ENCODE measurements at regions of chr5 and their contacts with region 1.

Region 1: GRCh38 chr5:71932655-71933338 is 174.5 kb upstream of the MAP1B start:
- DNase-seq: peak; percentile 92 to 93
- ATAC-seq: peak; percentile 86
- H3K4me3 ChIP-seq: no peak overlapping the region
- H3K27ac ChIP-seq: peak overlapping the region; percentile 91 to 99
- H3K4me1 ChIP-seq: no peaks in the 10 kb centered on the region
- H3K27me3 ChIP-seq: no peaks in the 10 kb centered on the region

Region 2: DNA sequence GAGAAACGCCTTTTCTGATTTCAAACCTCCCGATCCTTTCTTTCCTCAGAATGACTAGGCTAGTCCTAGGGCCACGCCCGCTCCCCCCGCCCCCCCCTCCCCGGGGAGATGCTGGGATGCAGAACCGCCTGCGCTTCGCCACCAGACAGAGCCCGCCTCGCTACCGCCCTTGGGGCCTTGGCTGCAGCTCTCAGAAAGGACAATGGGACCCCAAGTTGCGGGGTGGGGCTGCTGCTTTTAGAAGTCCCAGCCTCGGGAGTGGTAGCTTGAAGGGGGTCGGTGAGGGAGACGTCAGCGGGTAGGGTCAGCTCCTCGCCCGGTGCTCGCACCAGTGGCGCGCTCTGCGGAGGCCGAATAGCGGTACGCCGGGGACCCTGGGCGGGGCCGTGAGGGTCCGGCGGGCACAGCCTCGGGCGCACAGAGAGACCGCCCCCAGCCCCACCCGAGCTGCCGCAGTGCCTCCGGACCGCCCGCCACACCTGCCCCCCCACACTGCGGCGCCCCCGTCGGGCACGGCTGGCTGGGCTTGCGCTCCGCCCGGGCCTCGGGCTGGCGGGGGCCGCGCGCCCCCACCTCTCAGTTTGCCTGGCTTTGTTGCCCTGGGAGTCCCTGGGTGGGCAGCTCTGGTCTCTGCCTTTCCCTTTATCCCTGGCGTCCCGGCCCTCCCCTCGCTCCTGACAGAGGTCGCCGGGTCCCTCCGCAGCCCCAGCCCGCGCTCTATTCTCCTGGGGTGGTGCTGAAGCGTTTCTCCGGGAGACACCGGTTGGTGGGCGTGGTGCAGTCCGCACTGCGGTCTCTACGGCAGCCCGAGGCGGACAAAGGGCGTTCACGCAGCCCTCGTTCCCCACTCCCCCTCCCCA is 175.6 kb after region 1 on chr5:
- intact Hi-C with region 1: loop called in 1 of 2 experiments (anchors 5 kb)
- DNase-seq: peak; percentile 90 to 93
- ATAC-seq: peak; percentile 83
- H3K4me3 ChIP-seq: peak overlapping the region; percentile 88 to 96
- H3K27ac ChIP-seq: peak overlapping the region; percentile 93 to 96
- H3K4me1 ChIP-seq: peaks cover 0 to 2% of the 10 kb centered on the region in 2 donors
- H3K27me3 ChIP-seq: no peaks in the 10 kb centered on the region